Heart right ventricle (tissue), 16 donors: ENCODE measurements at regions of chr9 and their contacts with region 1.

Region 1: GRCh38 chr9:37746848-37747753 is 6.5 kb upstream of the TRMT10B start:
- DNase-seq: peak; percentile 30 to 35
- ATAC-seq: peak in 7 of 8 donors; percentile 47 to 82 (median 76)
- H3K4me3 ChIP-seq: no peak overlapping the region
- H3K27ac ChIP-seq: no peak overlapping the region
- H3K4me1 ChIP-seq: no peaks in the 10 kb centered on the region
- H3K27me3 ChIP-seq: no peaks in the 10 kb centered on the region
- CTCF ChIP-seq: peak; percentile 58 to 91 (median 85)

Region 2: GRCh38 chr9:38392235-38393127 is 645.4 kb after region 1 on chr9 and contains the start of gene ALDH1B1:
- intact Hi-C with region 1: loop called in 2 of 10 experiments (anchors 10 kb)
- DNase-seq: peak; percentile 80 to 87
- ATAC-seq: peak; percentile 98 to 99 (median 99)
- H3K4me3 ChIP-seq: peak within 1 kb of the TSS; percentile 54 to 89 (median 76)
- H3K27ac ChIP-seq: peak within 1 kb of the TSS in 8 of 10 donors; percentile 11 to 79 (median 54)
- H3K4me1 ChIP-seq: peaks cover 0 to 28% (median 15%) of the 10 kb centered on the region in 9 donors
- H3K27me3 ChIP-seq: peaks cover 0 to 3% (median 0%) of the 10 kb centered on the region in 7 donors
- CTCF ChIP-seq: peak in 5 of 9 donors; percentile 8 to 27 (median 22)
- total RNA-seq, gene ALDH1B1: 12.1 to 30.2 (median 18.9) TPM